ENCODE measurements at regions of chr12 and their contacts with region 1.

Region 1: DNA sequence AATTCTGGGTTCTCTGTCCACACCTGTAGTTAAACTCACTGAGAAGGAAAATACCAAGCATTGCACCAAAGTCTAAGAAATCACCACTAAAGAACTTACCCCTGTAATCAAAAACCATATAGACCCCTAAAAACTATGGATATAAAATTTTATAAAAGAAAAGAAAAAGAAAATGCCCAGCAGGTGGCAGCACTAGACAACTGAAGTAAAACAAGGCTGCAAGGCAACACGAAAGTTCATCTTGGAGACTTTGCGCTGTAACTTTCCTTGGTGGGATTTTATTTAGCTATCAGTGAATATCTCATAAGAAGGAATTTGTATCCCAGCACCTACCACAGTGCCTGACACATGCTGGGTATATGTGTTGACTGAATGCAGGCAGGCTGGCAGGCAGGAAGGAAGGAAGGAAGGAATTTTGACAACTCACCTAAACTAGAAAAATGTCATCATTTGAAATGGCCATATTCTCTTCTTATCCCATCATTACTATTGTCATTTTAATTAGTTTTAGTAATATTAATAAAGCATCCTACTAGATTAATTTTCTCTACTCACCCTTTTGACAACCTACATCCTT is 68.2 kb upstream of the ETV6 start:
- DNase-seq: peak; percentile 66
- H3K4me3 Mint-ChIP-seq: no peak overlapping the region
- H3K27ac Mint-ChIP-seq: no peak overlapping the region
- H3K4me1 Mint-ChIP-seq: peaks cover 16% of the 10 kb centered on the region
- H3K27me3 Mint-ChIP-seq: peaks cover 8% of the 10 kb centered on the region

Region 2: GRCh38 chr12:12070674-12071656 is 489.7 kb after region 1 on chr12 and contains the start of gene BCL2L14:
- CTCF ChIA-PET with region 1: interaction called, 12 read pairs
- POLR2A ChIA-PET with region 1: no interaction called
- DNase-seq: peak; percentile 38
- H3K4me3 Mint-ChIP-seq: peak within 1 kb of the TSS; percentile 83
- H3K27ac Mint-ChIP-seq: peak within 1 kb of the TSS; percentile 89
- H3K4me1 Mint-ChIP-seq: peaks cover 29% of the 10 kb centered on the region
- H3K27me3 Mint-ChIP-seq: peaks cover 2% of the 10 kb centered on the region
- total RNA-seq, gene BCL2L14: 13.0 to 13.9 TPM

Region 3: GRCh38 chr12:12327802-12328201 is 746.5 kb after region 1 on chr12:
- CTCF ChIA-PET with region 1: interaction called, 10 read pairs
- POLR2A ChIA-PET with region 1: no interaction called
- DNase-seq: no peak
- H3K4me3 Mint-ChIP-seq: no peak overlapping the region
- H3K27ac Mint-ChIP-seq: no peak overlapping the region
- H3K4me1 Mint-ChIP-seq: peaks cover 5% of the 10 kb centered on the region
- H3K27me3 Mint-ChIP-seq: peaks cover 15% of the 10 kb centered on the region

Region 4: GRCh38 chr12:12474931-12475795 is 893.9 kb after region 1 on chr12:
- CTCF ChIA-PET with region 1: no interaction called
- POLR2A ChIA-PET with region 1: no interaction called
- DNase-seq: peak; percentile 74
- H3K4me3 Mint-ChIP-seq: peak overlapping the region; percentile 67
- H3K27ac Mint-ChIP-seq: peak overlapping the region; percentile 100
- H3K4me1 Mint-ChIP-seq: peaks cover 86% of the 10 kb centered on the region
- H3K27me3 Mint-ChIP-seq: no peaks in the 10 kb centered on the region

Measured in activated CD4-positive, alpha-beta memory T cell treated with anti-CD3 and anti-CD28 coated beads, Interleukin-2, amount 10 ng/mL, durations not matched to agents 7 days and 5 days (primary cell).